ENCODE measurements at regions of chr16 and their contacts with region 1.

Region 1: DNA sequence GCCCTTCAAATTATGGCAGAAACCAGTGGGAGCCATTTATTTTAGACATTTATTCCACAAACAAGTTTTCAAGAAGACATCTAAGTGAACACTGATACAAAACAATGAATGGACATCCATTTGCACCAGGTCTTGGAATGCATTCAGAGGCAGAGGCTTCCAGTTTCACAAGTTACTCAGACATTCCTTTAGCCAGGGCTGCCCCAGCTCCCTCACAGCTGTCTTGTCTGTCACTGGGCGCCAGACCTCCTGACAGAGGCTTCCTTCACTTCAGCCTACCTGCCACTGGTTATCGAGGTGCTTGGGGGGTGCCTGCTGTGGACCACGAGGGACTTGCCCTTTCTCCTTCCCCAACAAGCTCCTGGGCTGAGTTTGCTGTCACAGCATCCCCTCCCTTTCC is 19.2 kb downstream of the AQP8 start:
- DNase-seq: no peak
- H3K4me3 ChIP-seq: no peak overlapping the region
- H3K27ac ChIP-seq: no peak overlapping the region
- H3K4me1 ChIP-seq: peaks cover 3% of the 10 kb centered on the region
- H3K27me3 ChIP-seq: no peaks in the 10 kb centered on the region
- CTCF ChIP-seq: no peak

Region 2: DNA sequence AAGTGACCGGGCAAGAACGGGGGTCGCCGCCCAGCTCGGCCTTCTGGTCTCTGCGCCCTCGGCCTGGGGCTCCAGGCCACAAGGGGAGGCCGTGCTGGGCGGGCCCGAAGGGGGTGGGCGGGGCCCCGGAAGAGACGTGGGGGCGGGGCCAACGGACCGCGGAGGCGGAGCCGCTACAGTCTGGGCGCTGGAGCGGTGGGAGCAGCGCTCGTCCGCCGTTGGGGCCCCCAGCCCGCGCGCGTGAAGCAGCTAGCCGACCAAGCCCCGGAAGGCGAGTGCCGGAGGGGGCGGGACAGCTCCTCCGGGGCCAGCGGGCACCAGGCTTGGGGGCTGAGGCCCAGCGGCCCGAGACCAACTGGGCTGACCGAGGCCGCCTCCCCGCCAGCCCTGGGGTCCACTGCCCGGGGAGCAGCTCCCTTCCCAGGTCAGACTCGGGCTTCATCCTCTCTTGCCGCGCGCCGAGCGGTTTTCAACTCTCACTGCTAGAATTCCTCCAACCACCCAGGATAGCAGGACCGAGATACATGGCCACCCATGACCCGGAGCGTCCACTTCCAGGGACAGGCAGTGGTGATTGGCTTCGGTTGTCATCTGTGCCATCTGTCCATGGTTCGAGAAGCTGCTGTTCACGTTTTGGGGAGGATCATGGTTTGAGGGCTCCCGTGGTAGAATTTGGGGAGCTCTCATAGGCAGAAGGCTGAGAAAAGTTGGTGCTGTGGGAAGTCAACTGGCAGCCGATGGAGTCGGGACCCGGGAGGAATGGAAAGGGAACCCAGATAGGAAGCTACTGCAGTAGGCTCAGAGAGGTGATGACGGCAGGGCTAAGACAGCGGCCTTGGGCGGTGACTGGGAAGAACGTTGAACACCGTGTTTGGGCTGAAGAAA is 169.0 kb before region 1 on chr16:
- intact Hi-C with region 1: loop called (anchors 10 kb)
- DNase-seq: peak; percentile 86
- H3K4me3 ChIP-seq: peak overlapping the region; percentile 89
- H3K27ac ChIP-seq: peak overlapping the region; percentile 94
- H3K4me1 ChIP-seq: peaks cover 40% of the 10 kb centered on the region
- H3K27me3 ChIP-seq: no peaks in the 10 kb centered on the region
- CTCF ChIP-seq: no peak

Measured in left ventricle myocardium inferior (tissue), 1 donor.